Body of pancreas (tissue), 4 donors: ENCODE measurements at regions of chr3 and their contacts with region 1.

Region 1: DNA sequence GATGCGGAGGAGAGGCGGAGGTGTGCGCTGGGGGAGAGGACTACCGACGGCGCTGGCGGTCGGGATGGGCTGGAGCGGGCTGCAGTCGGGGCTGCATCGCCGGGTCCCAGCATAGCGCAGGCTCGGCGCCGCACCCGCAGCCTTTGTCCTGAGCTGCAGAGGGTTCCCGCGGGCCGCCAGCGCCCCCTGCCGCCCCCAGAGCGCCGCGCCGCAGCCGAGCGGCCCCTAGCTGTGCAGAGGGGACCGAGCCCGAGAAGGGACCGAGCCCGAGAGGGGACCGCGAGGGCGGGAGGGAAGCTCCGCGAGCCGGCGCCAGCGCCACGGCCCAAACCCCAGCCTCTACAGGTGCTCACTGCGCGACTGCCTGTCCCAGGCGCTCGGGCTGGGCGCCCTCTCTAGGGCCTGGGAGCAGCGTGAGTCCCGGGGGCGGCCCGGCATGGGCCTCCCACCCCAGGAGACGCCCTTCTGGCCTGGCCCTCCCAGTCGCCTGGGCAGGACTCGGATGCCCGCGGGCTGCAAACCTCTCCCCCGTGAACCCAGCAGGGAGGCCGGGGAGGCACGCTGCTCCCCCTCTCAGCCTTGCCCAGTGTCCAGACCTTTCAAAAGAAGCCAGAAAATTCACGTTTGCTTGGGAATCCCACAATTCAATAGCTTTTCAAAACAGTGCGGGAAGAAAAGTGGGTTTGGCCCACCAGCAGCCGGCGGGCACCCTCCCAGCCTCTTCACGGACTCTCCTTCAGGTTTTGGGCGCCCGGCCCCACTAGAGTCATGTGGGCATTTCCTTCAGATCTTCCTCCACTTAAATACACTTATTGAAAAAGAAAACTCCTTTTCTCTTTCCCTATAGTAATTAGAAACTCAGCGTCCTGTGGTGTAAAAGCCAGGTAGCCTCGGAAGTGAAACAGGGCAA is 134.7 kb downstream of the TPRA1 start:
- DNase-seq: peak; percentile 65 to 79 (median 70)
- ATAC-seq: peak; percentile 85
- H3K4me3 ChIP-seq: no peak overlapping the region
- H3K27ac ChIP-seq: no peak overlapping the region
- H3K4me1 ChIP-seq: peaks cover 17% of the 10 kb centered on the region
- H3K27me3 ChIP-seq: peaks cover 6 to 12% of the 10 kb centered on the region in 2 donors
- CTCF ChIP-seq: peak; percentile 85 to 99 (median 95)
- POLR2A ChIP-seq: no peak

Region 2: GRCh38 chr3:126522363-126522788 is 933.4 kb before region 1 on chr3:
- intact Hi-C with region 1: loop called (anchors 10 kb)
- DNase-seq: peak; percentile 55 to 65 (median 58)
- ATAC-seq: no peak
- H3K4me3 ChIP-seq: no peak overlapping the region
- H3K27ac ChIP-seq: no peak overlapping the region
- H3K4me1 ChIP-seq: peaks cover 14% of the 10 kb centered on the region
- H3K27me3 ChIP-seq: no peaks in the 10 kb centered on the region
- CTCF ChIP-seq: peak; percentile 74 to 94 (median 85)
- POLR2A ChIP-seq: no peak

Region 3: DNA sequence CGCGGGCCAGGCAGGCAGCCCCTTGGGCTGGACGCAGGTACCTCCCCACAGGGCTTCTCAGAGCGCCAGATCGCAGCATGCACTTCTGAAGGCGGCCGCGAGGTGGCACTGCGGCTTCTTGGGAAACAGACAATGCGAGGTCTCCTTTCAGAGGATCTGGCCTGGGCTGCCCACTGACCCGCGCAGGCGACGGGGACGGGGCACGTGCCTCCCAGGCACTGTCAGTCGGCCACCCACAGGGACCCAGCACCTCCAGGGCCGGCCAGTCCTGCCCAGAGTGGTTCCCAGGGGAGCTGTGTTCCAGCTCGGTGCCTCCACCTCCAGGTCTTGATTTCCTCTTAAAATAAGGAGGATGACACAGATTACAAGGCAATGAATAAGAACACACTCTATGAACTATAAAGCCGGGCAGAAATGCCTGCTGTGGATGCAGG is 776.5 kb before region 1 on chr3:
- intact Hi-C with region 1: loop called (anchors 10 kb)
- DNase-seq: peak; percentile 80 to 90 (median 82)
- ATAC-seq: peak; percentile 83
- H3K4me3 ChIP-seq: no peak overlapping the region
- H3K27ac ChIP-seq: no peak overlapping the region
- H3K4me1 ChIP-seq: no peaks in the 10 kb centered on the region
- H3K27me3 ChIP-seq: no peaks in the 10 kb centered on the region
- CTCF ChIP-seq: peak; percentile 80 to 97 (median 87)
- POLR2A ChIP-seq: no peak

Region 4: DNA sequence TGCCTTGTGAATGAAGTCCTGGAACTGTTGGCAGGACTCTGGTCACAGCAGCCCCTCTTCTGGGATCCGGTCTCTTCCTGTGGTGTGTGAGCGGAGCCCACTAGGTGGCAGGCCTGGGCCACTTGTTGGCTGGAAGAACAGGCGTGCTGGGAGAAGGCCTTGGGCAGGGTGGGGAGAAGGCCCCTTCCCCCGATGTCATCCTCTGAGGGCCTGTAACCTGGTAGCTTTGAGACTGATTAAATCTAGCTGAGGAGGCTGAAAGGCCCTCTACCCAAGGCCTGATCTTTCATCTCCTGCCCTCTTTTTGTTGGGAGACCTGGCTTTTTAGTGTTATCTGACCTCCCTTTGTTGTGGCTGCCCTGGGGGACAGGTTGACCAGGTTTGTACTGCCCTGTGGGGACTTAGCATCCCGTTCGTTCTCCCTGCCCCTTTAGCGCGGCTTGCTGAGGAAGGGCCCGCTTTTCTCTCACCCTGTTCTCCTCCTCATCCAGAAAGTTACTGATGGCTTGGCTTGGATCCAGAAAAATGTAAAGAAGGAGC is 703.4 kb before region 1 on chr3:
- intact Hi-C with region 1: loop called (anchors 10 kb)
- DNase-seq: peak; percentile 71 to 78 (median 73)
- ATAC-seq: peak; percentile 69
- H3K4me3 ChIP-seq: no peak overlapping the region
- H3K27ac ChIP-seq: no peak overlapping the region
- H3K4me1 ChIP-seq: peaks cover 5% of the 10 kb centered on the region
- H3K27me3 ChIP-seq: no peaks in the 10 kb centered on the region
- CTCF ChIP-seq: peak; percentile 42 to 83 (median 76)
- POLR2A ChIP-seq: no peak